Heart left ventricle (tissue), 16 donors: ENCODE measurements at regions of chr1 and their contacts with region 1.

Region 1: DNA sequence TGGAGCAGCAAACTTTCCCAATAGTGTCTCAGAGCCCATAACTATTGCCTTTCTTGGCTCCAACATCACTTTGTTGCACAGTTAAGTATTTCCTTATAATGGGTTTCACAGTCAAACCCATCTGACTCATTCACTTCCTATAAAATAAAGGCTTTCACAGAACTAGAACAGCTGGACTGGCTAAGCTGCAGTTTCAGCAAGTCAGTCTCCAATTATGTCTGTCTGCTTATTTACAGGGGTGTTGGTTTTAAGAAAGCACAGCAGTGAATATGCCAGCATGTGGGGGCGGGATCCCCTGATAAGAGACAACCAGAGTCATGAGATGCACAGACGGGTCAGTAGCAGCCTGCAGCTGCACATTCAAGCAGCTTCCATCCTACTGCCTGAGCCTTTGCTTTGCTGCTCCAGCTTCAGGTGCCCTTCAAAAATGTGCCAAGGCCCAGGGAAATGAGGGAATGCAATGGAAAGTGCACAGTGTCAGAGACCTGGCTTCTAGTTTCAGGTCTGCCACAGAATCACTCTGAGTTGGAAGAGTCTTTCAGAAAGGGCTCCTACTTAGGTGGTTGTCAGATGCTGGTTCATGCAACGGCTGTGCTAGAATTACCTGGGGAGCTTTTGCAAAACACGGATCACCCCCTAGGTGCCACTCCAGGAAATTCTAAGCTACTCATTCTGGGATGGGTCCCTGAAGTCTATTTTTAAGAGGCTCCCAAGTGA is 24.8 kb downstream of the RNF19B start:
- DNase-seq: peak in 4 of 5 donors; percentile 64 to 80 (median 76)
- ATAC-seq: peak; percentile 63 to 95 (median 93)
- H3K4me3 ChIP-seq: no peak overlapping the region
- H3K27ac ChIP-seq: peak overlapping the region in 6 of 12 donors; percentile 12 to 63 (median 26)
- H3K4me1 ChIP-seq: peaks cover 0 to 52% (median 15%) of the 10 kb centered on the region in 12 donors
- H3K27me3 ChIP-seq: no peaks in the 10 kb centered on the region
- CTCF ChIP-seq: no peak
- POLR2A ChIP-seq: no peak

Region 2: GRCh38 chr1:32992489-32993323 is 52.9 kb after region 1 on chr1:
- intact Hi-C with region 1: loop called in 1 of 10 experiments (anchors 10 kb)
- DNase-seq: peak; percentile 74 to 88 (median 86)
- ATAC-seq: peak; percentile 55 to 89 (median 76)
- H3K4me3 ChIP-seq: no peak overlapping the region
- H3K27ac ChIP-seq: peak overlapping the region in 11 of 12 donors; percentile 1 to 92 (median 57)
- H3K4me1 ChIP-seq: peaks cover 18 to 90% (median 57%) of the 10 kb centered on the region in 12 donors
- H3K27me3 ChIP-seq: no peaks in the 10 kb centered on the region
- CTCF ChIP-seq: no peak
- POLR2A ChIP-seq: peak in 1 of 2 donors; percentile 24

Region 3: DNA sequence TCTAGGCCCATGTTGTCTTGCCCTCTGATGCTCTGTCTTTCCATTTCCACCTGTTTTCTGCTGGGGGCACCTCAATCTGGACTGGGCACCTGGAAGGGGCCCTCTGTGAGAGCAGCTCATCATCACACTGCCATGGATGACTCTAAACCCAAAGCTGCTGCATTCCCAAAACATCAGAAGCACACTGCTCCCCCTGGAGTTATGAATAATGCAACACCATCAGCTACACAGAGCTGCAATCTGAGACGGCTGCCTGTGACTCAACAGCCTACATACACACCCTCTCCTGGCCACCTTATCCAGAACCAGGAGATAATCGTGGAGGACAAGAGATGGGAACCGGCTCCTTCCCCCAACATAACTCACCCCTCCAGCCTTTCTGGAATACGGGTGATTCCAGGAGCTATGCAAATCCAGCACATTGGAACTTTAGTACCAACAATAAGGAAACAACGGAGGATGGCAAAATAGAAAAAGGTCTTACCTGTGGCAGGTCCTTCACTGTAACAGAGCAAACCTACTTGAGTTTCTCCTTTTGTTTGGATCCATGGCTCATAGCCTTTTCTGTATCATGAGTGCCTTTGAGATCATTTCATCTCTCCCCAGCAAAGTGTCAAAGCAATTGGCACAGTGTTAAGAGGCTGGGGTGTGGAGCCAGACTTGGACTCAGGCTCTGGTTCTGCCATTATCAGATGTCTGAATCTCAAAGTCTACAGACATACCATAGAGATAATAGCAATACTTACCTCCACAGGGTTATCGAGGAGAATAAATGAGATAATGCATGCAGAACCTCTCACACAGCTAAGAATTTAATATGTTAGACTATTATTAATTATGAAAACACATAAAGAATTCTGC is 67.6 kb after region 1 on chr1:
- intact Hi-C with region 1: loop called in 4 of 10 experiments (anchors 5 to 10 kb)
- DNase-seq: peak in 3 of 5 donors; percentile 38 to 59 (median 50)
- ATAC-seq: peak; percentile 43 to 80 (median 67)
- H3K4me3 ChIP-seq: no peak overlapping the region
- H3K27ac ChIP-seq: peak overlapping the region in 3 of 12 donors; percentile 27 to 91 (median 84)
- H3K4me1 ChIP-seq: peaks cover 10 to 85% (median 62%) of the 10 kb centered on the region in 12 donors
- H3K27me3 ChIP-seq: no peaks in the 10 kb centered on the region
- CTCF ChIP-seq: peak in 11 of 12 donors; percentile 13 to 52 (median 33)
- POLR2A ChIP-seq: no peak

Region 4: DNA sequence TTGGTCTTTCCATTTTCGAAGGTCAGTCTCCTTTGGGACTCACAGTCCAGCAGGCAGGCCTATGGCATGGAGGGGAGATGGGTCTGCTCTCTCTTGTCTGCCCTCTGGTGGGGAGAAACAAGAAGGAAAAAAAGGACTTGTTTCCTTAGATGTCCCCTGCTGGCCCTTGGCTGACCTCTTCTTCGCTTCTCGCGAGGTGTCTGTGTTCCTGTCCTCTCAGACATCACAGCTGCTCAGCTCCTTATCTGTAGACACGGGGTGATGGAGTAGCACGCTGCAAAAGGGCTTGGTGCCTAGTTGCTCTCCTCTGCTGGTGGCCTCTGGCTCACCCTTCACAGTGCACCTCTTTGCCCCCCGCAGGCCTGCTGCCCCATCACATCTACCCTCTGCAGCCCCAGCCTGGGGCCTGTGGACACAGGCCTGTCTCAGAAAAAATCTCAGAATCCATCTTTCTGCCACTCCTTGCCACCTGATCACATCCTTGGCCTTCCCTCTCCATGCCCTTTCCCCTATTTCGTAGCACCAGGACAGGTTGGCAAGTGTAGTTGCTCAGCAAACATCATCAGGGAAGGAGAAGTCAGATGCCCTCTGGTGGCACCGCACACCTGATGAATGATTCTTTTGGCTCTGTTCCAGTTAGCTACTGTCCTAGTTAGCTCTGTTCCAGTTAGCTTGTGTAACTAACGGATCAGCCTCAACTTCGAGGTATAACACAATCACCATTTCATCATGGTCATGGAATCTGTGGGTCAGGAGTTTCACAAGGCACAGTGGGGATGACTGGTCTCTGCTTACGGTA is 115.6 kb after region 1 on chr1:
- intact Hi-C with region 1: loop called in 2 of 10 experiments (anchors 2 to 5 kb)
- DNase-seq: peak; percentile 83 to 94 (median 87)
- ATAC-seq: peak; percentile 90 to 98 (median 96)
- H3K4me3 ChIP-seq: no peak overlapping the region
- H3K27ac ChIP-seq: peak overlapping the region in 11 of 12 donors; percentile 17 to 70 (median 51)
- H3K4me1 ChIP-seq: peaks cover 0 to 22% (median 13%) of the 10 kb centered on the region in 12 donors
- H3K27me3 ChIP-seq: no peaks in the 10 kb centered on the region
- CTCF ChIP-seq: peak; percentile 67 to 83 (median 74)
- POLR2A ChIP-seq: no peak